Heart right ventricle (tissue), 16 donors: ENCODE measurements at regions of chr6 and their contacts with region 1.

Region 1: GRCh38 chr6:160041608-160042007 is 72.7 kb downstream of the IGF2R start:
- DNase-seq: peak; percentile 39 to 63
- ATAC-seq: peak; percentile 38 to 93 (median 78)
- H3K4me3 ChIP-seq: no peak overlapping the region
- H3K27ac ChIP-seq: no peak overlapping the region
- H3K4me1 ChIP-seq: peaks cover 2 to 54% (median 29%) of the 10 kb centered on the region in 9 donors
- H3K27me3 ChIP-seq: no peaks in the 10 kb centered on the region
- CTCF ChIP-seq: peak in 4 of 9 donors; percentile 16 to 39 (median 36)

Region 2: DNA sequence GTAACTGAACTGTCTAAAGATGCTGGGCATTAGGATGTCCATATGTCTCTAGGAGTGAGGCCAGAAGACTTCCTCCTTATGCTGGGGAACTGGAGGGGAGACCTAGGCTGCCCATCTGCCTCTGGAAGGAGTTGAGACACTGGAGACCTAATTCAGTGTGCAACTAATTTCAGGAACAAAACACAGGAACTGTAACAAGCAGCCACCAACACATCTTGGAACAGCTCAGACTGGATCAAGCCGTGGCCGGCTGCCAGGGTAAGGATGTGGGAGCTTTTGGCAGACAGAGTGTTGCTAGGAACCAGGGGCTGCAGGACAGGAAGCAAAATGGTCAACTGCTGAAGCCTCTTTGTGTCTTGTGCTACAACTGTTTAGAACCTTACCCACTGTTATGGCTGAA is 167.2 kb before region 1 on chr6:
- intact Hi-C with region 1: loop called in 7 of 10 experiments (anchors 10 kb)
- DNase-seq: peak; percentile 59 to 69
- ATAC-seq: peak; percentile 17 to 65 (median 56)
- H3K4me3 ChIP-seq: no peak overlapping the region
- H3K27ac ChIP-seq: no peak overlapping the region
- H3K4me1 ChIP-seq: peaks cover 0 to 10% (median 6%) of the 10 kb centered on the region in 9 donors
- H3K27me3 ChIP-seq: no peaks in the 10 kb centered on the region
- CTCF ChIP-seq: no peak

Region 3: DNA sequence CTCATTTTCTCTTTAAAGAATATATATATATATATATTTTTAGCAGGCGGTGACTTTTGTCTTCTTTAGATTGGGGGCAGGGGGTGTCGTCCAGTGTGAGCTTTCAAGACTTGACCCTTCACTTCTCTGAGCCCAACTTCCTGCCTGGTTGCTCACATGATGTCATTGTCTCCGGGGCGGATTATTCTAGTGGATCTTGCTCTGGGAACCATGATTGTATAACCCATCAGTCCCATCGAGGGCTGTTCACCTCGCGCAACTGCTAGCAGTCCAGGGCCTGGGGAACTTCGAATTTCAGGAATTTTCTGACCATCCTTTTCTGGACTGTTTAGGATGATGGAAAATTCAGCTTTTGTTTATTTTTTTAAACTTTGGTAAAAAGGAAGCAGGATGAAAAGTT is 71.7 kb before region 1 on chr6:
- intact Hi-C with region 1: loop called in 5 of 10 experiments (anchors 5 to 10 kb)
- DNase-seq: peak in 1 of 2 donors; percentile 74
- ATAC-seq: peak in 7 of 8 donors; percentile 52 to 79 (median 68)
- H3K4me3 ChIP-seq: peak overlapping the region; percentile 84 to 99 (median 97)
- H3K27ac ChIP-seq: peak overlapping the region; percentile 26 to 98 (median 94)
- H3K4me1 ChIP-seq: peaks cover 15 to 81% (median 49%) of the 10 kb centered on the region in 9 donors
- H3K27me3 ChIP-seq: no peaks in the 10 kb centered on the region
- CTCF ChIP-seq: no peak

Region 4: GRCh38 chr6:159979136-159979874 is 62.3 kb before region 1 on chr6:
- intact Hi-C with region 1: loop called in 5 of 10 experiments (anchors 5 to 10 kb)
- DNase-seq: peak in 1 of 2 donors; percentile 24
- ATAC-seq: peak in 6 of 8 donors; percentile 7 to 70 (median 40)
- H3K4me3 ChIP-seq: no peak overlapping the region
- H3K27ac ChIP-seq: peak overlapping the region in 9 of 10 donors; percentile 55 to 85 (median 72)
- H3K4me1 ChIP-seq: peaks cover 26 to 100% (median 84%) of the 10 kb centered on the region in 9 donors
- H3K27me3 ChIP-seq: no peaks in the 10 kb centered on the region
- CTCF ChIP-seq: no peak

Region 5: DNA sequence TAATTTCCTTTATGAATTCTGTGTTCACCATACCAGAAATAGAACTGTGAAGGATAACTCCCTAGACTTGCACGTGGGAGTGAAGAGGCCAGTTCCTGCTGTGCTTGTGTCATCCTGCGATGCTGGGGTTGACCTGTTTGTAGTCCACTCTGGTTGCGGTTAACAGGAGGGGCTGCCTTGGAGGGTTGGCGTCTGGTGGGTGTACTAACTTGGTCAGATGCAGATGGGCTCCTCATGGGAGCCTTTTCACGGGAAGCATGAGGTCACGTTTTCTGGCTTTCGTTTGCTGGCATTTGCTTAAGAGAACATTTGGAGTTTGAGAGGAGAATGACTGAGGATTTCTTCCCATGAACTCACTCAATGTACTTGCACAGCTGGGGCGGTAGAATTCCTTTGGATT is 31.5 kb before region 1 on chr6:
- intact Hi-C with region 1: no loop called
- DNase-seq: peak in 1 of 2 donors; percentile 74
- ATAC-seq: peak; percentile 66 to 87 (median 81)
- H3K4me3 ChIP-seq: no peak overlapping the region
- H3K27ac ChIP-seq: peak overlapping the region in 5 of 10 donors; percentile 7 to 64 (median 49)
- H3K4me1 ChIP-seq: peaks cover 0 to 66% (median 45%) of the 10 kb centered on the region in 9 donors
- H3K27me3 ChIP-seq: no peaks in the 10 kb centered on the region
- CTCF ChIP-seq: no peak

Region 6: GRCh38 chr6:160022793-160023192 is 18.8 kb before region 1 on chr6:
- intact Hi-C with region 1: no loop called
- DNase-seq: no peak
- ATAC-seq: no peak
- H3K4me3 ChIP-seq: no peak overlapping the region
- H3K27ac ChIP-seq: no peak overlapping the region
- H3K4me1 ChIP-seq: no peaks in the 10 kb centered on the region
- H3K27me3 ChIP-seq: no peaks in the 10 kb centered on the region
- CTCF ChIP-seq: no peak

Region 7: DNA sequence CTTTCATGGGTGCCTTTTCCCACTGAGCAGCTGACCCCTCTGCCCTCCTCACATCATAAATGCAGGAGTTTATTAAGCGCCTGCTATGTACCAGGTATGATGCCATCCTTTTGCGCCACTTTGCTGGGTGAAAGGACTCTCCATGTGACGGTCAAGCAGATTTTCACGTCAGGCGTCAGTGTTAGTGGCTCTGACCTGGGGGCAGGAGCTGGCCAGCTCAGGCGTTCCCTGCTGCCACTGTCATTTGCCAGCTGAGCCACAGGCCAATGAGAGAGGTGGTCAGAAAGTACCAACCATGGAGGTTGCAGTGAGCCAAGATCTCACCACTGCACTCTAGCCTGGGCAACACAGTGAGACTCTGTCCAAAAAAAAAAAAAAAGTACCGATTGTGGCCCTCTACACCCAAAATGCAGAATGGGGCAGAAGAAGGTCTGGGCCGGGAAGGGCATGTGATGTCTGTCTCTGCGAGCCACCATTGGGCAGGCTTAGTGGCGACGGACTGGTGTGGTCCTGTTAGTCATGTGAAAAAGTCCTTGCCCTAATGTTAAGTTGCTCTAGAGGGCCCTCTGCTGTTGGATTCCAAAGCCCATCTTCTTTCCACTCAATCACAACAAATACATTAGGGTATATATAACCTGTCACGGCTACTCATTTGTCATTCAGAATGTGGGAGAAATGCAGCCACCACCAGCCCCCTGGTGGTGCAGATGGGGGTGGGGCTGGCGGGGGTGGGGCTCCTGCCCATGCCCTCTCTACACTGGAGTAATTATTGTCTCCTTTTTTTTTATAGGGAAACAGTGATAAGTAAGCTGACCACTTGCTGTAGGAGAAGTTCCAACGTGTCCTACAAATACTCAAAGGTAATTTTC is 61.6 kb after region 1 on chr6:
- intact Hi-C with region 1: loop called in 1 of 10 experiments (anchors 2 kb)
- DNase-seq: no peak
- ATAC-seq: peak in 1 of 8 donors; percentile 20
- H3K4me3 ChIP-seq: no peak overlapping the region
- H3K27ac ChIP-seq: no peak overlapping the region
- H3K4me1 ChIP-seq: peaks cover 0 to 27% (median 6%) of the 10 kb centered on the region in 9 donors
- H3K27me3 ChIP-seq: no peaks in the 10 kb centered on the region
- CTCF ChIP-seq: peak in 7 of 9 donors; percentile 16 to 44 (median 28)

Region 8: GRCh38 chr6:160202411-160202810 is 160.8 kb after region 1 on chr6:
- intact Hi-C with region 1: loop called in 1 of 10 experiments (anchors 5 kb)
- DNase-seq: no peak
- ATAC-seq: no peak
- H3K4me3 ChIP-seq: no peak overlapping the region
- H3K27ac ChIP-seq: no peak overlapping the region
- H3K4me1 ChIP-seq: no peaks in the 10 kb centered on the region
- H3K27me3 ChIP-seq: peaks cover 0 to 4% (median 0%) of the 10 kb centered on the region in 7 donors
- CTCF ChIP-seq: no peak

Region 9: DNA sequence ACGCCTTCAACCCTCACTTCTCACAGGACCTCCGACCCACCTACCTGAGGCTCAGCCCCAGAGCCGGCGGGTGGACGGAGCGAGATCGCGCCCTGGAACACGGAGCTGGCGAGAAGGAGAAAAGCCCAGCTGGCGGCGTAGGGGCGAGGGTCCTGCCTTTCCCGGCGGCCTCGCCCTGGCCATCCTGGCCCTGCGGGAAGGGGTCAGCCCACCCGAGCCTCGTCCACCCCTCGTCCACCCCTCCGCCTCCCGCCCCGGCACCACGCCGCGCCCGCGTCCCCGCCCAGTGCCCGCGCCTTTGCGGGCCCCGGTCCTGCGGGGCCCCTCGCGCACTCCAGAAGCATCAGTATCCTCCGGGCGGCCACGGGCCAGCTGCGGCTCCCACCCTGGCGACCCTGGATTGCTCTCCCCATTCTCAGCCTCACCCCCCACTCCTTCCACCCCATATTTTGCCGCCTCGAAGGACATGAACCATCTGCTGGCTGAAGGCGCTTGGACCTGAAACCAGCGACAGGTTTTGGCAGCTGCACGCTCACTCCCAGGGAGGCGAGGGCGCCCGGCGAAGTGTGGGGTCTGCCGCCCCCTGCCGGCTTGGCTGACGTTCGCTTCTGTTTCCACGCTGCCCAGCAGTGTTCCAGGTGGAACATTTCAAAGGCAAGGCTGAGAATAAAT is 725.5 kb after region 1 on chr6:
- intact Hi-C with region 1: no loop called
- DNase-seq: peak; percentile 29 to 57
- ATAC-seq: peak; percentile 75 to 89 (median 82)
- H3K4me3 ChIP-seq: peak overlapping the region in 9 of 10 donors; percentile 21 to 57 (median 44)
- H3K27ac ChIP-seq: no peak overlapping the region
- H3K4me1 ChIP-seq: peaks cover 0 to 12% (median 5%) of the 10 kb centered on the region in 9 donors
- H3K27me3 ChIP-seq: peaks cover 0 to 41% (median 26%) of the 10 kb centered on the region in 7 donors
- CTCF ChIP-seq: peak; percentile 22 to 77 (median 70)